ENCODE measurements at regions of chr19 and their contacts with region 1.

Region 1: DNA sequence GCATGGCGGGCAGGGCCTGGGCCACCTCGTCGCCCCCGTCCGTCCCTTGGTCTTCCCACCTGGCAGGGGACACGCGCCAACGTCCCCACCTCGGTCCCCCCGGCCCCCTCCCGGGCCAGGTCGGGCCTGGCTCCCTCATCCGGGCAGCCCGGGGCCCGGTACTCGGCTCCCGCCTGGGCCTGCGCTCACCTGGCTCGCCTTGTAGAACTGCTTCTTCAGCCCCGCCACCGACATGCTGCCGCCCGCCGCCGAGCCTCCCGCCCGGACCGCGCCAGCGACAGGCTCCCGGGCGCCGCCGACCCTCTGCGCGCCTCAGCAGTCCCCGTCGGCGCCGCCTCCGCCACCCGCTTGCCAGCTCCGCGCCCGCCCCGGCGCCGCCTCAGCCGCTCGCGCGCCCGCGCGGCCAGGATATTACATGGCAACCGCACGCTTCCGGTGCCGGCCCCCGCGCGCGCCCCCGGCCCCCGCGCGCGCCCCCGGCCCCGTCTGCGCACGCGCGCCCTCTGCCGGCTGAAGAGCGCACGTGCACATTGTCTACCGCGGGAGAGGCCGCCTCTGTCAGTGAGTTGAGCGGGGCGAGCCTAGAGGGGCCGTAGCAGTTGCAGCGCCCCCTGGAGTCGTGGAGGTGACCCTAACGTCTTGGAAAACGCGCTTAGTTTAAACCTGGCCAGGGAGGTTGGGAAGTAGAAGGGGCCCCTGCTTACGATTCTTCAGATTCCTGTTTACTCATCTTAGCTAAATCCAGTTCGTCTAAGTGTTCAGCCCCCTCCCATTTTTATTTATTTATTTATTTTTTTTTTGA is at the start of gene SH3GL1:
- DNase-seq: peak; percentile 87 to 98 (median 92)
- ATAC-seq: peak; percentile 87
- H3K4me3 ChIP-seq: peak within 1 kb of the TSS; percentile 87
- H3K4me3 Mint-ChIP-seq: peak within 1 kb of the TSS; percentile 80 to 99 (median 92)
- H3K27ac ChIP-seq: peak within 1 kb of the TSS; percentile 97
- H3K27ac Mint-ChIP-seq: peak within 1 kb of the TSS; percentile 87 to 100 (median 99)
- H3K4me1 ChIP-seq: peaks cover 31 to 38% of the 10 kb centered on the region in 2 donors
- H3K4me1 Mint-ChIP-seq: peaks cover 23 to 75% (median 60%) of the 10 kb centered on the region in 7 donors
- H3K27me3 ChIP-seq: no peaks in the 10 kb centered on the region
- H3K27me3 Mint-ChIP-seq: no peaks in the 10 kb centered on the region
- total RNA-seq, gene SH3GL1: 37.1 to 77.0 (median 38.6) TPM

Region 2: GRCh38 chr19:3500429-3501130 is 899.8 kb before region 1 on chr19 and contains the start of gene DOHH:
- CTCF ChIA-PET with region 1: no interaction called
- POLR2A ChIA-PET with region 1: no interaction called
- intact Hi-C with region 1: loop called in 1 of 2 experiments (anchors 2 kb)
- DNase-seq: peak; percentile 81 to 97 (median 94)
- ATAC-seq: peak; percentile 94
- H3K4me3 ChIP-seq: peak within 1 kb of the TSS; percentile 72
- H3K4me3 Mint-ChIP-seq: peak within 1 kb of the TSS; percentile 81 to 96 (median 93)
- H3K27ac ChIP-seq: peak within 1 kb of the TSS; percentile 82
- H3K27ac Mint-ChIP-seq: peak within 1 kb of the TSS; percentile 91 to 98 (median 96)
- H3K4me1 ChIP-seq: peaks cover 12 to 25% of the 10 kb centered on the region in 2 donors
- H3K4me1 Mint-ChIP-seq: peaks cover 13 to 41% (median 31%) of the 10 kb centered on the region in 7 donors
- H3K27me3 ChIP-seq: no peaks in the 10 kb centered on the region
- H3K27me3 Mint-ChIP-seq: peaks cover 0 to 5% (median 0%) of the 10 kb centered on the region in 5 donors
- total RNA-seq, gene DOHH: 4.4 to 16.4 (median 8.0) TPM

Region 3: DNA sequence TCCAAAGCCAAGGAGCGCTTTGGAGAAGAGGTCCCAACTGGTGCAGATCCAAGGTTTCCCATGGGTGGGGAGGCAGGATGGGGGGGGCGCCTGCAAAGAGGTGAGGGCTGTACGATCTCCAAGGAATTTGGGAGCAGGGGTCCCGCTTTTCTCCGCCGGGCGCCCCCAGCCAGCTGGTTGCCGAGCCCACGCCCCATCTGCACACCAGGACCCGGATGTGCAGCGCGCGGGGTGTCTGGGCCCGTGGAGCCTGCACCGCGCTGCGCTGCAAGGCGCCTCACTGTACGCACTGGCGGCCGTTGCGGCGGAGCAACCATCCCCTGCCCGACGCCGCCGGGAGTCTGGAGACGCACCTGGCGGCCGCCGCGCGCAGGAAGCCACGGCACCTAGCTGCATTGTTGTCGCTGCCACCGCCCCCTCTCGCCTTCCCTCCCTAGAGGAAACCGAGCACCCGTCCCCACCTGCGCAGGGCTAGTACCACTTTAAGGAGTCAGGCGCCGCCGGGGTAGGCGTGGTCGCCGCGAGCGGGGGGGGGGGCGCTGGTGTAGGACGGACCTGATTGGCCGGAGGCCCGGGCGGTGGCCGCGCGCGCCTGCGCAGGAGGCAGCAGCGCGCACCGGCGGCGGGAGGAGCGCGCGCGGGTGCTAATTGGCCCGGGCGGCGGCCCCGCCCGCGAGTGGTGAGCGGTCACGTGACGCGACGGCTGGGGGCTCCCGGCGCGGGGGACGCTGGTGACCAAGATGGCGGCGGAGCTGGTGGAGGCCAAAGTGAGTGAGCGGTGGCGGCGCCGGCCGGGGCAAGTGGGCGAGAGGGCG is 393.1 kb before region 1 on chr19 and contains the start of gene PIAS4:
- CTCF ChIA-PET with region 1: no interaction called
- POLR2A ChIA-PET with region 1: no interaction called
- intact Hi-C with region 1: loop called in 1 of 2 experiments (anchors 5 kb)
- DNase-seq: peak; percentile 93 to 97 (median 96)
- ATAC-seq: peak; percentile 95
- H3K4me3 ChIP-seq: peak within 1 kb of the TSS; percentile 76
- H3K4me3 Mint-ChIP-seq: peak within 1 kb of the TSS; percentile 82 to 93 (median 88)
- H3K27ac ChIP-seq: peak within 1 kb of the TSS; percentile 75
- H3K27ac Mint-ChIP-seq: peak within 1 kb of the TSS; percentile 31 to 93 (median 85)
- H3K4me1 ChIP-seq: peaks cover 26 to 27% of the 10 kb centered on the region in 2 donors
- H3K4me1 Mint-ChIP-seq: peaks cover 13 to 33% (median 23%) of the 10 kb centered on the region in 7 donors
- H3K27me3 ChIP-seq: no peaks in the 10 kb centered on the region
- H3K27me3 Mint-ChIP-seq: no peaks in the 10 kb centered on the region
- total RNA-seq, gene PIAS4: 23.9 to 40.6 (median 28.8) TPM

Region 4: DNA sequence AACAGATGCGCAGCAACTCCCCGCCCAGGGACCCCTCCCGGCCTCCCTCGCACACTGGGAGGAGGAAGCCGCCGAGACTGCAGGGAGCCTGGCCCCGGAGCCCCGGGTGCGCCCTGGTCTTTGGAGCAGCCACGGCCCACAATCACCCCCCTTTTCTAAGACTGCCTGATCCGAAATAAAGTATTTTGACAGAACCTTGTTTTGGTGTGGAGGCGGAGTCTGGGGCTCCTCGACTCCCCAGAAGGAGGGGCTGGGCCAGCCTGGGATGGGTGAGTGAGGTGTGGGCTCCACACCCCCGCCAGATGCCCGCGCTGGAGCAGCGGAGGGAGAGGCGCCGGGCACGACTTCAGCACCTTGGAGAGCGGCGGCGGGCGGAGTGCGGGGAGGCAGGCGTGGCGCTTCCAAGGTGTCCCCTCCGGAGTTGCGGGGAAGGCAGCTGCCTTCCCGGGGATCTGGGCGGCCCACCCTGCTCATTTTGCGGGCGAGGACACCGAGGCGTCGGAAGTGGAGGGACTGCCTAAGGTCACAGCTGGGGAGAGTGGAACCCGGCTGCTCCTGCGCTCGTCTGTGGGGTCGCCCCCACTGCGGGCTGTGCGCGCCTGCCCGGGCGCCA is 227.4 kb before region 1 on chr19:
- CTCF ChIA-PET with region 1: no interaction called
- POLR2A ChIA-PET with region 1: no interaction called
- intact Hi-C with region 1: no loop called
- DNase-seq: peak; percentile 39 to 85 (median 70)
- ATAC-seq: peak; percentile 87
- H3K4me3 ChIP-seq: no peak overlapping the region
- H3K4me3 Mint-ChIP-seq: peak overlapping the region in 1 of 10 donors; percentile 53
- H3K27ac ChIP-seq: no peak overlapping the region
- H3K27ac Mint-ChIP-seq: no peak overlapping the region
- H3K4me1 ChIP-seq: no peaks in the 10 kb centered on the region
- H3K4me1 Mint-ChIP-seq: peaks cover 0 to 14% (median 2%) of the 10 kb centered on the region in 7 donors
- H3K27me3 ChIP-seq: peaks cover 0 to 4% of the 10 kb centered on the region in 2 donors
- H3K27me3 Mint-ChIP-seq: peaks cover 3 to 27% (median 11%) of the 10 kb centered on the region in 5 donors

Region 5: DNA sequence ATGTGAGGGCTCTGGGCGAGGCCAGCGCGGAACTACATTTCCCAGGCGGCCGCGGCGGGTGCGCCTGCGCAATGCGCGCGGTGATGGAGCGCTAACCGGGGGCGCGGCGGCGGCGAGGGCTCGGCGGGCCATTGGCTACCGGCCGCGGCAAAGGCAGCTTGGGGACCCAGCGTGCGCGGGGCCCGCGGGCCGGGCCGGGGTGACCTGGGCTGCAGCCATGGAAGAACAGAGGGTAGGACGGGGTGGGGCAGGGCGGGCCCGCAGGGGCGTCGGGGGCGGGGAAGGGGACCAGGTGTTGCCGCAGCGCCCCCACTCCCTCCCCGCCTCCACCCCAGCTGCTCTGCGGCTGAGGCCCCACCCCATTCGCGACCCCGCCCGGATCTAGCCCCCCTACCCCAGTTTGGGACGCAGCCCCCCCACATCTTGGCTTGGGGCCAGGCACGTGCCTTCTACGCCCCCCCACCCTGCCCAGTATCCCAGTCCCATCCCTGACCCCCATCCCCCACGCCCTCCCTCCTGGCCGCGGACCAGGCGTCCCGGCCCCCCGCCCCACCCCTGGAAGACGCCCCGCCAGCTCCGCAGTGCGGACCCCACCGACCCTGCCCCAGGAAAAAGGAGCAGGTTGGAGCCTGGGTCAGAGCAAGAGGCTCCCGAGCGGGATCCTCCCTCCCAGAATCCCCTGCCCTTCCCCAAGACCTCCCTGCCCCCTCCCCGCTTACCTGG is 95.6 kb before region 1 on chr19 and contains the start of gene FSD1:
- CTCF ChIA-PET with region 1: no interaction called
- POLR2A ChIA-PET with region 1: interaction called, 3 read pairs
- intact Hi-C with region 1: loop called in 1 of 2 experiments (anchors 1 kb)
- DNase-seq: peak; percentile 32 to 89 (median 56)
- ATAC-seq: peak; percentile 65
- H3K4me3 ChIP-seq: peak within 1 kb of the TSS; percentile 43
- H3K4me3 Mint-ChIP-seq: peak within 1 kb of the TSS; percentile 59 to 98 (median 79)
- H3K27ac ChIP-seq: peak within 1 kb of the TSS; percentile 35
- H3K27ac Mint-ChIP-seq: peak within 1 kb of the TSS in 8 of 9 donors; percentile 48 to 96 (median 84)
- H3K4me1 ChIP-seq: peaks cover 4 to 28% of the 10 kb centered on the region in 2 donors
- H3K4me1 Mint-ChIP-seq: peaks cover 8 to 43% (median 33%) of the 10 kb centered on the region in 7 donors
- H3K27me3 ChIP-seq: no peaks in the 10 kb centered on the region
- H3K27me3 Mint-ChIP-seq: no peaks in the 10 kb centered on the region
- total RNA-seq, gene FSD1: 1.8 to 18.9 (median 3.4) TPM

Region 6: GRCh38 chr19:4379355-4380253 is 20.7 kb before region 1 on chr19:
- CTCF ChIA-PET with region 1: interaction called, 3 read pairs
- POLR2A ChIA-PET with region 1: interaction called, 5 read pairs
- intact Hi-C with region 1: loop called (anchors 1 kb)
- DNase-seq: peak in 5 of 9 donors; percentile 12 to 52 (median 19)
- ATAC-seq: peak; percentile 46
- H3K4me3 ChIP-seq: peak overlapping the region; percentile 57
- H3K4me3 Mint-ChIP-seq: peak overlapping the region; percentile 78 to 94 (median 86)
- H3K27ac ChIP-seq: peak overlapping the region; percentile 68
- H3K27ac Mint-ChIP-seq: peak overlapping the region; percentile 92 to 97 (median 95)
- H3K4me1 ChIP-seq: peaks cover 27 to 38% of the 10 kb centered on the region in 2 donors
- H3K4me1 Mint-ChIP-seq: peaks cover 34 to 67% (median 56%) of the 10 kb centered on the region in 7 donors
- H3K27me3 ChIP-seq: no peaks in the 10 kb centered on the region
- H3K27me3 Mint-ChIP-seq: no peaks in the 10 kb centered on the region

Region 7: GRCh38 chr19:4638828-4639530 is 238.6 kb after region 1 on chr19 and contains the start of gene TNFAIP8L1:
- CTCF ChIA-PET with region 1: no interaction called
- POLR2A ChIA-PET with region 1: no interaction called
- intact Hi-C with region 1: loop called in 1 of 2 experiments (anchors 1 kb)
- DNase-seq: peak; percentile 97 to 100 (median 99)
- ATAC-seq: peak; percentile 97
- H3K4me3 ChIP-seq: peak within 1 kb of the TSS; percentile 81
- H3K4me3 Mint-ChIP-seq: peak within 1 kb of the TSS; percentile 90 to 99 (median 96)
- H3K27ac ChIP-seq: peak within 1 kb of the TSS; percentile 92
- H3K27ac Mint-ChIP-seq: peak within 1 kb of the TSS; percentile 92 to 99 (median 97)
- H3K4me1 ChIP-seq: peaks cover 27 to 32% of the 10 kb centered on the region in 2 donors
- H3K4me1 Mint-ChIP-seq: peaks cover 15 to 43% (median 32%) of the 10 kb centered on the region in 7 donors
- H3K27me3 ChIP-seq: no peaks in the 10 kb centered on the region
- H3K27me3 Mint-ChIP-seq: no peaks in the 10 kb centered on the region
- total RNA-seq, gene TNFAIP8L1: 11.2 to 22.4 (median 20.6) TPM

Region 8: GRCh38 chr19:4968462-4969291 is 568.3 kb after region 1 on chr19 and contains the start of gene KDM4B:
- CTCF ChIA-PET with region 1: no interaction called
- POLR2A ChIA-PET with region 1: no interaction called
- intact Hi-C with region 1: loop called in 1 of 2 experiments (anchors 2 kb)
- DNase-seq: peak; percentile 97 to 100 (median 99)
- ATAC-seq: peak; percentile 94
- H3K4me3 ChIP-seq: peak within 1 kb of the TSS; percentile 69
- H3K4me3 Mint-ChIP-seq: peak within 1 kb of the TSS; percentile 88 to 97 (median 94)
- H3K27ac ChIP-seq: peak within 1 kb of the TSS; percentile 67
- H3K27ac Mint-ChIP-seq: peak within 1 kb of the TSS; percentile 84 to 96 (median 91)
- H3K4me1 ChIP-seq: peaks cover 26 to 29% of the 10 kb centered on the region in 2 donors
- H3K4me1 Mint-ChIP-seq: peaks cover 26 to 40% (median 32%) of the 10 kb centered on the region in 7 donors
- H3K27me3 ChIP-seq: no peaks in the 10 kb centered on the region
- H3K27me3 Mint-ChIP-seq: no peaks in the 10 kb centered on the region
- total RNA-seq, gene KDM4B: 45.8 to 78.0 (median 65.8) TPM